Caco-2 (cell line): ENCODE measurements at regions of chr1 and their contacts with region 1.

Region 1: DNA sequence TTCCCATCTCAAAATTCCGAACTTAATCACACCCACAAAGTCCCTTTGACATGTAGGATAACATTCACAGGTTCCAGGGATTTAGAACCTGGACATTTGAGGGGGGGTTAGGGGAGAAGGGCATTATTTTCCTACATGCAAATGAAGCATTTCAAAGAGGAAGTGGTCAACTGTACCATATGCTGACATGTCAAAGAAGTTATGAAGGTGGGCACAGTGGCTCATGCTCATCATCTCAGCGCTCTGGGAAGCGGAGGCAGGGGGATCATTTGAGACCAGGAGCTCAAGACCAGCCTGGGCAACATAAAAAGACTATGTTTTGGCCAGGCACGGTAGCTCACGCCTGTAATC is 35.7 kb downstream of the PTP4A2 start:
- DNase-seq: no peak
- H3K4me3 ChIP-seq: no peak overlapping the region
- H3K4me3 Mint-ChIP-seq: no peak overlapping the region
- H3K27ac Mint-ChIP-seq: no peak overlapping the region
- H3K4me1 ChIP-seq: no peaks in the 10 kb centered on the region
- H3K4me1 Mint-ChIP-seq: no peaks in the 10 kb centered on the region
- H3K27me3 ChIP-seq: no peaks in the 10 kb centered on the region
- H3K27me3 Mint-ChIP-seq: no peaks in the 10 kb centered on the region
- CTCF ChIP-seq: no peak

Region 2: DNA sequence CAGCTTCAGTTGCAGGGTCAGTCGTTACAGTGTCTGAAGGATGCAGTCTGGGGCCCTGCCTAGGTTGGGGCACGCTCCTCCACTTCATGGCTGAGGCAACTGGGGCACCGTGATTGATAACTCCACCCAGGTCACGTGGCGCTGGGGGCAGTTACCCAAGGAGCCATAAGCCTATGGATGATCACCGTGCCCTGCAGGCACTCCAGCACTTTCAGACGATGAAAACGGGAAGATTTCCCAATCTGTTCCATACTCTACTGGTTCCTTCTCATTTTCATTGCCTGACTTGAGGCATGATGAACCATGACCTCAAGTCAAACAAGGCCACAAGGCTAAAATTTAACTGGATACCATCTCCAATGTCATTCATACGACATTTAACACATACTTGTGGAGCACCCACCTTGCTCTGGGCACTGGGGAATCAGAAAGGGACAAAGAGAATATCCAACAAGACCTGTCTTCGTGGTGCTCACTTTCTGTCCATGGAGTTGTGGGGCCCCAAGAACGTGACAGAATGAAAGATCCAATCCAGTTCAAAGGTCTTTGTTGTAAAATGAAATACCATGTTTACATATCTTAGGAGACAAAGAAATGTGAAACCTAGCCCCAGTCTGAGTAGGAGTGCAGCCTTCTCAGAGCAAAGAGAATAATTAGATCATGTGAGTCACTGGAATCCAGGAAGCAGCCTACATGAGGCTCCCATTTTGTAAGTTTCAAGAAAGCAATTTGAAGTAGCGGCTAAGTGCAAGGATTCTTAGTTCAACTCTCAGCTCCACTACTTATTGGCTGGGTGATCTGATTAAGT is 47.2 kb before region 1 on chr1:
- CTCF ChIA-PET with region 1: no interaction called
- POLR2A ChIA-PET with region 1: no interaction called
- intact Hi-C with region 1: no loop called
- DNase-seq: peak; percentile 68 to 75
- H3K4me3 ChIP-seq: no peak overlapping the region
- H3K4me3 Mint-ChIP-seq: no peak overlapping the region
- H3K27ac Mint-ChIP-seq: no peak overlapping the region
- H3K4me1 ChIP-seq: peaks cover 18% of the 10 kb centered on the region
- H3K4me1 Mint-ChIP-seq: no peaks in the 10 kb centered on the region
- H3K27me3 ChIP-seq: no peaks in the 10 kb centered on the region
- H3K27me3 Mint-ChIP-seq: no peaks in the 10 kb centered on the region
- CTCF ChIP-seq: no peak

Region 3: GRCh38 chr1:31949862-31950261 is 47.4 kb after region 1 on chr1:
- CTCF ChIA-PET with region 1: no interaction called
- POLR2A ChIA-PET with region 1: interaction called, 14 read pairs
- intact Hi-C with region 1: no loop called
- DNase-seq: no peak
- H3K4me3 ChIP-seq: no peak overlapping the region
- H3K4me3 Mint-ChIP-seq: no peak overlapping the region
- H3K27ac Mint-ChIP-seq: no peak overlapping the region
- H3K4me1 ChIP-seq: peaks cover 6% of the 10 kb centered on the region
- H3K4me1 Mint-ChIP-seq: peaks cover 7% of the 10 kb centered on the region
- H3K27me3 ChIP-seq: no peaks in the 10 kb centered on the region
- H3K27me3 Mint-ChIP-seq: no peaks in the 10 kb centered on the region
- CTCF ChIP-seq: no peak